ENCODE measurements at regions of chr16 and their contacts with region 1.

Region 1: GRCh38 chr16:67917852-67918236 is 13.8 kb downstream of the CTRL start:
- DNase-seq: no peak
- H3K4me3 ChIP-seq: no peak overlapping the region
- H3K27me3 ChIP-seq: no peaks in the 10 kb centered on the region
- CTCF ChIP-seq: no peak

Region 2: DNA sequence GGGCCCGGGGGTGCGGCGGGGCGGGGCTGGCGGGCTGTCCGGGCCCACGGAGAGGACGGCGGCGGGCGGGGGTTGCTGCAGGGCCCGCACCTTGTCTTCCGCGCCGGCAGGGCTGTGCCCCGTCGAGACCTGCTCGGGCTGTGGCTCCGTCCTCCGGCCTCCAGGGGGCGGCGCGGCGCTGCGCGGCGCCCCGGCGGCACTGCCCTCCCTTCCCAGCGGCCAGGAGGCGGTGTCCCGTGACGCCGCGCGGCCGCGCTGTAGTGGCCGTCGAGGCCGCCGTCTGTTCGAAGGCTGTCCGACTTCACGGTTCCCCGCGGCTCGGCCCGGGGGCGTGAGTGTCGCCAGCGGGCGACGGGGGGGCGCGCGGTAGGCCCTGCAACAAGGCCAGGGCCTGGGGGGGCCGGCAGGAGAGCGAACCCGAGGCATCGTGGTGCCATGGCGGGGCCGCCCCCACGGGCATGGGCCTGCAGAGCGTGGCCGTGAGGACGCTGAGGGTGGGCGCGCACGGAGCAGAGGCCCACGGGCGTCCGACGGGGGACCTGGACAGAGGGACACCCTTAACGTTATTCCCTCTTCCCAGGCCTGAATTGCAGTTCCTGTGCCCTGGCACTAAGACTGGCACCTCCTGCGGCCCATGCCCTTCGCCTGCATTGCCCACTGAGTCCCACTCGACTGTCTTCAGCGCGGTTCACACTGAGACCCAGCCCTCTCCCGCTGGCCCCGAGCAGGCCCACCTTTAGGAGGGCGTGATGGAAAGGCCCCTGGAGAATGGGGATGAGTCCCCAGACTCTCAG is 638.4 kb before region 1 on chr16 and contains the start of gene PLEKHG4:
- CTCF ChIA-PET with region 1: no interaction called
- POLR2A ChIA-PET with region 1: no interaction called
- DNase-seq: no peak
- H3K4me3 ChIP-seq: peak within 1 kb of the TSS; percentile 53
- H3K27me3 ChIP-seq: no peaks in the 10 kb centered on the region
- CTCF ChIP-seq: peak; percentile 36
- polyA plus RNA-seq, gene PLEKHG4: 12.1 and 25.2 TPM in 2 replicates

Region 3: GRCh38 chr16:67892899-67893742 is 24.7 kb before region 1 on chr16 and contains the start of gene PSKH1:
- CTCF ChIA-PET with region 1: no interaction called
- POLR2A ChIA-PET with region 1: no interaction called
- DNase-seq: peak; percentile 60
- H3K4me3 ChIP-seq: peak within 1 kb of the TSS; percentile 95
- H3K27me3 ChIP-seq: no peaks in the 10 kb centered on the region
- CTCF ChIP-seq: no peak
- polyA plus RNA-seq, gene PSKH1: 26.0 and 45.5 TPM in 2 replicates

Region 4: GRCh38 chr16:67928561-67929364 is 10.9 kb after region 1 on chr16:
- CTCF ChIA-PET with region 1: interaction called, 19 read pairs
- POLR2A ChIA-PET with region 1: no interaction called
- DNase-seq: no peak
- H3K4me3 ChIP-seq: no peak overlapping the region
- H3K27me3 ChIP-seq: no peaks in the 10 kb centered on the region
- CTCF ChIP-seq: peak; percentile 93

Region 5: DNA sequence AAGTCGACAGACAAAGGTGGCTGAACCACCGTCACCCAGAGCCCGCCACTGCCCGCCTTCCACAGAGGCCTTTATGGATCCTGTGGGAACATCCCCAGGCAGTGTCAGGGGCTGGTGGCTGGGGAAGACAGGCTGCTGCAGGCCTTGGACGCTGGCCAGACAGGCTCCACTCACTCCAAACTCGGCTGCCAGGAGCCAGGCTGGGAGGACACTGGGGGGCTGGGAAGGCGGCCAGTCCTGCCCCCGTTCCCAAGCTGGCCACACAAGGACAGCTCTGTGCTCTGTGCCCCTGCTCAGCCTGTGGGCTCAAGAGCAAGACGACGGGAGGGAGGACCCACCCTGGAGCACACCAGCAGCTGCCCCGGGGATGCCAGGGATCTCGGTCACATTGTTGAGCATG is 33.6 kb after region 1 on chr16:
- CTCF ChIA-PET with region 1: no interaction called
- POLR2A ChIA-PET with region 1: no interaction called
- DNase-seq: no peak
- H3K4me3 ChIP-seq: no peak overlapping the region
- H3K27me3 ChIP-seq: no peaks in the 10 kb centered on the region
- CTCF ChIP-seq: no peak

Region 6: DNA sequence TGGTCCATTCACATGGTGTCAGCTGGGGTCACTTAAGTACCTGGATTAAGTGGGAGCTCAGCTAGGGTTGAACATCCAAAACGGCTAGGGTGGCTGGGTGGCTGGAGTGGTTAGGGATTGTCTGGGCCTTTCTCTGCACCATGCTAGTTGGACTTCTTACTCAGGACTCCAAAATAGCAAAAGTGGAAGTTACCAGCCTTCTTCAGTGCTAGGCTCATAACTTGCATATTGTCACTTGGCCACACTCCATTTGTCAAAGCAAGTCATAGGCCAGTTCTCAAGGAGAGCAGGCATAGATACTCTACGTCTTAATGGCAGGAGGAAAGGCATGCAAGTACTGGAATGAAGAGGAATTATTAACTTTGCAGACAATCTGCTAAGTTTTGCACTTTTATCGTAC is 248.4 kb after region 1 on chr16:
- CTCF ChIA-PET with region 1: no interaction called
- POLR2A ChIA-PET with region 1: no interaction called
- DNase-seq: no peak
- H3K4me3 ChIP-seq: no peak overlapping the region
- H3K27me3 ChIP-seq: no peaks in the 10 kb centered on the region
- CTCF ChIP-seq: no peak